AG04450 (cell line): ENCODE measurements at regions of chr22 and their contacts with region 1.

Region 1: DNA sequence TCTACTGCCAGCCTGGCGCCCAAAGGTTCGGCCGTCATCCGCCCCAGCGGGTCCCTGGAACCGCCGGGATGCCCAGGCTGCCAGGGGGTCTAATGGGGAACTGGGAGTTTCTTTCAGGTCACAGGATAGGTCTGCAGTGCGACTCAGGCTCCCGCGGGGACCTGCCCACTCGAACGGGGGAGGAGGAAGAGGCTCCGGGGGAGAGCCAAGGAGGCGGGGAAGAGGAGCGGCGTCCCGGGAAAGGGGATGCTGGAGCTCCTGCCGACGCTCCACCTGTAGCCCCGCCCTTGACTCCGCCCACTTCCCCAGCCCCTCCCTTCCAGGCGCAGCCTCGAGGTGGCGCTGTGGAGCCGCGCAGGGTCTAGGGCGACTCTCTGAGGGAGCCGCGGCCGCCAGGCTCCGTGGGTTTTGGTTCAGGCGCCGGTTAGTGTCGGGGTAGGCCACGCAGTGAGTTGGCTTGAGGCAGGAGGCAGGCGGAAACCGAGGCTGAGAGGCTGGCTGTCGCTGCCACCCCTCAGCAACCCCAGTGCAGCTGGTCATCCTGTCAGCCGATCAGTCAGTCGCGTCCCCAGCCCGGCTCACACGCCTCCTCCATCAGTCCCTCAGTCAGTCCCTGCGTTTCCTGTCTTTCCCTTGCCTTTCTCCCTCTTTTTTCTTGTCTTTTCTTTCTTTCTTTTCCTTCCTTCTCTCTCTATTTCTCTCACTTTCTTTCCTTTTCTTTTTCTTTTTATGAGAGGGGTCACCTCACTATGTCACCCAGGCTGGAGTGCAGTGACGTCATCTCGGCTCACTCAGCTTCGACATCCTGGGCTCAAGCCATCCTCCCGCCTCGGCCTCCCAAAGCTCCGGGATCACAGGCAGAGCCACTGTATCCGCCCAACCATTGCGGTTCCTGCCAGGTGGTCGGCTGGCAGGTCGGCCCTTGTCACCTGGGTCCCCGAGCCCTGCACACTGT is 26.4 kb downstream of the YWHAH start:
- DNase-seq: peak; percentile 7
- H3K4me3 ChIP-seq: peak overlapping the region; percentile 63
- H3K27ac ChIP-seq: no peak overlapping the region
- H3K27me3 ChIP-seq: peaks cover 2% of the 10 kb centered on the region
- CTCF ChIP-seq: peak; percentile 89

Region 2: GRCh38 chr22:31661851-31662656 is 308.7 kb before region 1 on chr22 and contains the start of gene PISD:
- CTCF ChIA-PET with region 1: interaction called, 18 read pairs
- POLR2A ChIA-PET with region 1: interaction called, 3 read pairs
- DNase-seq: peak; percentile 74
- H3K4me3 ChIP-seq: peak within 1 kb of the TSS; percentile 98
- H3K27ac ChIP-seq: peak within 1 kb of the TSS; percentile 88
- H3K27me3 ChIP-seq: no peaks in the 10 kb centered on the region
- CTCF ChIP-seq: no peak
- polyA plus RNA-seq, gene PISD: 21.6 and 26.6 TPM in 2 replicates

Region 3: GRCh38 chr22:31952459-31952858 is 18.3 kb before region 1 on chr22:
- CTCF ChIA-PET with region 1: interaction called, 40 read pairs
- POLR2A ChIA-PET with region 1: no interaction called
- DNase-seq: peak; percentile 49
- H3K4me3 ChIP-seq: no peak overlapping the region
- H3K27ac ChIP-seq: no peak overlapping the region
- H3K27me3 ChIP-seq: no peaks in the 10 kb centered on the region
- CTCF ChIP-seq: no peak

Region 4: GRCh38 chr22:32469797-32470212 is 499.0 kb after region 1 on chr22:
- CTCF ChIA-PET with region 1: interaction called, 11 read pairs
- POLR2A ChIA-PET with region 1: no interaction called
- DNase-seq: peak; percentile 32
- H3K4me3 ChIP-seq: no peak overlapping the region
- H3K27ac ChIP-seq: no peak overlapping the region
- H3K27me3 ChIP-seq: peaks cover 3% of the 10 kb centered on the region
- CTCF ChIP-seq: no peak